Caco-2 (cell line): ENCODE measurements at regions of chr5 and their contacts with region 1.

Region 1: DNA sequence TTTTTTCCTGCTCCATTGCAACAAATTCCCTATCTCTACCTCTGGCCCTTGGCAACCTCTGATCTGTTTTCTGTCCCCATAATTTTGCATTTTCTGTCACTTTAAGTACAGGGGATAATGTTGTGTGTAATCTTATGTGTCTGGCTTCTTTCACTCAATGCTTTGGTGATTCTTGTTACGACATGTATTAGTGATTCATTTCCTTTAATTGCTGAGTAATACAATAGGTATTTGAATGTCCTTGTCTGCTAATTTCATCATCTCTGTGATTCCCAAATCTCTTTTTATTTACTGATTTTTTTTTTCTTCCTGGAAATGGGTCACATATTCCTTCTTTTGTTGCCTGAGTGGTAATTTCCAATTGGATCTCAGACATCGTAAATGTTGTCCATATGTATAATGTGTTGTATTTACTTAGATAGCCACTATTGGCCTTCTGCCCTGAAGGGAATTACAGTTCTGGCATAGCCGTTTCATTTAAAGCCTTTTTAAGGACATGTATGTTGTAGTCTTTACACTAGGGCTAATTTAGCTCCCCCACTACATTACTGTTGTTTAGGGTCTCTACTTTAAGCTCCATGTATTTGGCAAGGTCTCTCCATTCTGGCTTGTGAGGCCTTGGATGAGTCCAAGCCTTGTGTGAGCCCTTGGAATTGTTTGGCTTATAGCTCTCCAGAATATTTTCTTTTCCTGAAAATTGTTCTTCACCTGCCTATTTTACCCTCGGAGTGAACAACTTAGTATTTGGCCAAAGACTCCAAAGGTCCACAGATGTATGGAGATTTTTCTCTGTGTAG is 683.8 kb downstream of the LRRC70 start:
- DNase-seq: no peak
- H3K4me3 ChIP-seq: no peak overlapping the region
- H3K4me3 Mint-ChIP-seq: no peak overlapping the region
- H3K27ac Mint-ChIP-seq: no peak overlapping the region
- H3K4me1 ChIP-seq: no peaks in the 10 kb centered on the region; the same call in 1 of the 2 replicates
- H3K4me1 Mint-ChIP-seq: peaks cover 9% of the 10 kb centered on the region
- H3K27me3 ChIP-seq: no peaks in the 10 kb centered on the region
- H3K27me3 Mint-ChIP-seq: no peaks in the 10 kb centered on the region
- CTCF ChIP-seq: no peak

Region 2: GRCh38 chr5:63228144-63228543 is 34.2 kb before region 1 on chr5:
- CTCF ChIA-PET with region 1: no interaction called
- POLR2A ChIA-PET with region 1: no interaction called
- intact Hi-C with region 1: loop called (anchors 5 kb)
- DNase-seq: peak in 1 of 2 experiments; percentile 34
- H3K4me3 ChIP-seq: no peak overlapping the region
- H3K4me3 Mint-ChIP-seq: no peak overlapping the region
- H3K27ac Mint-ChIP-seq: no peak overlapping the region
- H3K4me1 ChIP-seq: peaks cover 22% of the 10 kb centered on the region
- H3K4me1 Mint-ChIP-seq: peaks cover 14% of the 10 kb centered on the region
- H3K27me3 ChIP-seq: no peaks in the 10 kb centered on the region
- H3K27me3 Mint-ChIP-seq: no peaks in the 10 kb centered on the region
- CTCF ChIP-seq: no peak